ENCODE measurements at regions of chr1 and their contacts with region 1.

Region 1: DNA sequence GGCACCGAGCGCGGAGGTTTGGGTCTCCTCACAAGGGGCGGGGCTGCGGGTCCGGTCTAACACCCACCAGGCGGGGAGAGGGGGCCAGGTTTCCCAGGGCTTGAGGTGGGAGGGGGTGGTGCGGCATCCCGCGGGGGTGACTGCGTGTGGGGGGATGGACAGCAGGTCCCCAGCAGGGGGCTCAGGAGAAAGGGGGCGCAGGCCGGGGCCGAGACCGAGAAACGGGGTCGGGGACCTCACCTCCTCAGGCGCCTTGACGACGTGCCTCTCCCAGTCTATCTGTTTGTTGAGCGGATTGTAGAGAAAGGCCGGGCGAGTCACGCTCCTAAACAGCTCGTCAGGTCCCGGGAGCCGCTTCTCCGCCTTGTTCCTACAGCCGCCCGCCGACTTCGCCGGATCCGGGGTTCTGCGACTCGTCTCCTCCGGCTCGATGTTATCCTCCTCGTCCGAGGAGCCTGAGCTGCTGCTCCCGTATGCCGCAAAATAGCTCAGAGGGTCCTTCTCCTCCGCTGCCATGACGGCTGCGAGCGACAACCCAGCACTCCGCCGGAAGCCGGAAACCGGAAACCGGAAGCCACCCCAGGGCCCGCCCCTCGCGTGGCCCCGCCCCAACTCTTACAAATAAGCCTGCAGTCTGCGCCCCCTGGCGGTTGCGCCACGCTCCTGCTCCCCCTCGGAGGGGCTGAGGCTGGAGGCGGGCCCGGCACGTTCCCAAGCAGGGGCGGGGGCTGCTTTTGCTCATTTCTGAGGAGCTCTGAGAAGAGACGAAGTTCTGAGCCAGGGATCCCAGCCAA is at the start of gene C1orf52:
- DNase-seq: peak; percentile 95 to 98
- H3K4me3 ChIP-seq: peak within 1 kb of the TSS; percentile 87 to 97 (median 90)
- H3K27ac ChIP-seq: peak within 1 kb of the TSS; percentile 86 to 89 (median 88)
- H3K4me1 ChIP-seq: peaks cover 21 to 65% (median 40%) of the 10 kb centered on the region in 4 donors
- H3K27me3 ChIP-seq: no peaks in the 10 kb centered on the region
- CTCF ChIP-seq: peak in 6 of 7 experiments; percentile 89 to 99 (median 98)
- EP300 ChIP-seq: no peak
- POLR2A ChIP-seq: no peak
- total RNA-seq, gene C1orf52: 5.8 to 39.3 (median 23.5) TPM

Region 2: GRCh38 chr1:84944767-84945486 is 314.4 kb before region 1 on chr1:
- intact Hi-C with region 1: loop called (anchors 10 kb)
- DNase-seq: peak; percentile 57 to 97
- H3K4me3 ChIP-seq: peak overlapping the region; percentile 38 to 43 (median 40)
- H3K27ac ChIP-seq: peak overlapping the region in 4 of 5 donors; percentile 66 to 83 (median 82)
- H3K4me1 ChIP-seq: peaks cover 4 to 16% (median 8%) of the 10 kb centered on the region in 4 donors
- H3K27me3 ChIP-seq: no peaks in the 10 kb centered on the region
- CTCF ChIP-seq: peak in 5 of 7 experiments; percentile 77 to 98 (median 90)
- EP300 ChIP-seq: no peak
- POLR2A ChIP-seq: no peak

Region 3: DNA sequence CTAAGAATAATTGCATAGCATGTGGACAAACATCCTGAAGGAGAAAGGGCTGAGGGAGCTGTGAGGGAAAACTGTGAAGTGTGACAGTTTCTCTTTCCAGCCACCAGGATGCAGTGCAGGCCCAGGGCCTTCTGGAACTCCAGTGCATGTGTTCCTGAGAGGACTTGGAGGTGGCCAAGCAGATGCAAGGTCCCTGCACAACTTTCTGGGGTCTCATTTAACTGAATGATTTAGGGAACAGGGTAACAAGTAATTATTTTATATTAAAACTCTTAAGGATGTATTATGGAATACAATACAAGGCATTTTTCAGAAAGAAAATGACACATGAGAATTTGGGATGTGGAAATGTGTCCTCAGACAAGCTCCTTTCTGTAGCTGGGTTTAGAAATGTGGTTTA is 149.8 kb before region 1 on chr1:
- intact Hi-C with region 1: loop called (anchors 5 kb)
- DNase-seq: peak; percentile 67 to 88
- H3K4me3 ChIP-seq: no peak overlapping the region
- H3K27ac ChIP-seq: no peak overlapping the region
- H3K4me1 ChIP-seq: no peaks in the 10 kb centered on the region
- H3K27me3 ChIP-seq: no peaks in the 10 kb centered on the region
- CTCF ChIP-seq: peak in 5 of 7 experiments; percentile 68 to 85 (median 80)
- EP300 ChIP-seq: no peak
- POLR2A ChIP-seq: no peak

Region 4: GRCh38 chr1:85128341-85128740 is 131.0 kb before region 1 on chr1:
- intact Hi-C with region 1: no loop called
- DNase-seq: no peak
- H3K4me3 ChIP-seq: no peak overlapping the region
- H3K27ac ChIP-seq: no peak overlapping the region
- H3K4me1 ChIP-seq: peaks cover 0 to 12% (median 3%) of the 10 kb centered on the region in 4 donors
- H3K27me3 ChIP-seq: no peaks in the 10 kb centered on the region
- CTCF ChIP-seq: no peak
- EP300 ChIP-seq: no peak
- POLR2A ChIP-seq: no peak